PC-9 (cell line): ENCODE measurements at regions of chr1 and their contacts with region 1.

Region 1: DNA sequence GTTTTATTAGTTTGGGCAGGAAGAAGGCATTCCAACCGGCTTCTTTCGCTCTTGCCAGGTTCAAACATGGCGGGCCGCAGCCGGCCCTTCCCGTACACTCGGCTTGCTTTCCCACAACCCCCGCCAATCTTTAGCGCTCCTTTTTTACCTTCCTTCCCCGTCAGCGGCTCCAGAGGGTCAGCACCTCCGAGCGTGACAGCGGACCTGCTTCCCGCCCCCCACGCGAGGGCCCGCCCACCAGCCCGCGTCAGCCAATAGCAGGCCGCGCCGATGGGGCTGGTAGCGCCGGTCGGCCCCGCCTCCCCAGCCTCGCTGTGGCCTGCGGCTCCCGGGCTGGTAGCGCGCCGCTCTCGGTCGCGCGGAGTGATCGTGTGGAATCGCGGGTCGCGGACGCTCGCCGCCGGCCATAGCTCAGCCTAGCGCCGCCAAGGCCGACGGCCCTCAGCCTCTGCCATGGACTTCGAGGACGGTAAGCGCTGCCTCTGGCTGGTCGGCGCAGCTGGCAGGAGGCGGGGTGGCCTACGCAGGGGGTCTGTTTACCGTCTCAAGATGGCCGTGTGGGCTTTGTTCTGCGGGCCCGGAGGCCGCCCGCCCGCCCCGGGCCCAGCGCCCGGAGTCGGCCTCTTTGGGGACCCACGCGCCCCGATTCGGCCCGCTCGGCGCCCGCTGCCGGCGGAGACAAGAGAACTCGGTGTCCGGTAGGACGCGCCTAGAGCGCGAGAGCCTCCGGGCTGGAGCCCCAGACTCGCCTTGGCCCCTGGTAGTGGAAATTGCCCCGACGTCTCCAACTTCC is at the start of gene ZNF326:
- DNase-seq: peak; percentile 97 to 98
- H3K4me3 ChIP-seq: peak within 1 kb of the TSS; percentile 70
- H3K27ac ChIP-seq: peak within 1 kb of the TSS; percentile 87
- H3K4me1 ChIP-seq: peaks cover 78% of the 10 kb centered on the region
- H3K27me3 ChIP-seq: no peaks in the 10 kb centered on the region
- CTCF ChIP-seq: no peak; the same call in 1 of the 2 replicates
- total RNA-seq, gene ZNF326: 23.2 and 26.2 TPM in 2 replicates

Region 2: DNA sequence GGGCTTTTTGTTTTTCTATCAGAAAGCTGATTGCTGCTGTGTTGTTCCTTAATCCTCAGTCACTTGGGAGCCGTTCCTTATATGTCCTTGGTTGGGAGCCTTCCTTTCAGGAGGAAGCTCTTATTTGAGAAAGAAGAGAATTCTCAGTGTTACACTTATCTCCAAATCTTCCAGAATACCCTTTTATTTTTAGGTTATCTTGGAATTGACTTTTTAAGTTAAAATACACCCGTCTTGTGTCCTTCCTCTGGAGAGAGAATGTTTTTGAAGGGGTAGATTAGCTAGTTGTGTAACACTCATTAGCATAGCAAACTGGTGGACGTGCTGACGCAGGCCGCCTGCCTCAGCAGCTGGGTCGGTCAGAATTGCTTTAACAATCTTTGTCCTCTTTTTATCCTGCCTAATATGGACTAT is 428.2 kb before region 1 on chr1:
- CTCF ChIA-PET with region 1: no interaction called
- POLR2A ChIA-PET with region 1: no interaction called
- intact Hi-C with region 1: no loop called
- DNase-seq: no peak
- H3K4me3 ChIP-seq: no peak overlapping the region
- H3K27ac ChIP-seq: no peak overlapping the region
- H3K4me1 ChIP-seq: no peaks in the 10 kb centered on the region
- H3K27me3 ChIP-seq: no peaks in the 10 kb centered on the region
- CTCF ChIP-seq: no peak

Region 3: DNA sequence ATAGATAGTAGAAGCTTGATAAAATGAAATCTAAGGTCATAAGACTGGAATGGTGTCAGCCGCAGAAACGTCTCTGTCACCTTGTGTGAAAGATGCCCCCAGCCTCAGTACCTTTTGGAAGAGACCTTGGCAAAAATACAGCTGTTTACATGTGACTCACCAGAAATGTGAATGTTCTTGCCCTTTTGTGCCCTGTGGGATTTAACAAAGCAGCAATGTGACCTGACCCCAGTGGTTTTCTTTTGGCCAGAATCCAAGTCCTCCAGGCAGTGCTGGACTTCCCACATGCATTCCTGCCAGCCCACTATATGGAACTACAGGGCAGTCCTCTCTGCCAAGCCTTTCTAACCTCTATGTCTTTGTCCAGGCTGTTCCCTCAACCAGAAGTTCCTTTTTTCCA is 389.3 kb before region 1 on chr1:
- CTCF ChIA-PET with region 1: no interaction called
- POLR2A ChIA-PET with region 1: no interaction called
- intact Hi-C with region 1: loop called (anchors 10 kb)
- DNase-seq: peak; percentile 81 to 94
- H3K4me3 ChIP-seq: no peak overlapping the region
- H3K27ac ChIP-seq: no peak overlapping the region
- H3K4me1 ChIP-seq: peaks cover 20% of the 10 kb centered on the region
- H3K27me3 ChIP-seq: no peaks in the 10 kb centered on the region
- CTCF ChIP-seq: no peak

Region 4: DNA sequence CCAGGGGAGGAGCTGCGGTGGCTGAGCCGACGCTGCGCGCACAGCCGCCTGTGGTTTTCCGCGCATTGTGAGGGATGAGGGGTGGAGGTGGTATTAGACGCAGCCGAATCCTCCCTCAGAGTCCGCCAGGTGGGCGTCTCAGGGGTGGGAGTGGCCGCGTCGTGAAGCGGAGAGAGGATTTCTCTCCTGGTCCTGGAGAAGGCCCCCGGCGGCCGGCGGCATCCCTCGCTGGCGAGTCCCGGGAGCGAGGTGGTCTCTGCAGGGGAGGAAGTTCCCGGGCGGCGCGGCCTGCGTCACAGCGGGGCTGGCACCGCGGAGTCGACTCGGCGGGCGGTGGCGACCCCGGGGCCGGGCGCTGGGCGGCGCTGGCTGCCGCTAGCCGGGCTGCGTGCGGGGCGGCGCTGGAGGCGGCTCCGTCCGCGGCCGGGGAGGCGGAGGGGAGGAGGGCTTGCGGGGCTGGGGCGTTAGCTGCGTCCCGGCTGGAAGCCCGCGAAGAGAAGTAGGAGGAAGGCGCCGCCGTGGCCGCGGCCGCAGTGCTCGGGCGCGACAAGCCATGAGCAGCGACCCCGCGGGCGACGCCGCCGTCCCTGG is 362.2 kb before region 1 on chr1 and contains the start of gene LRRC8C:
- CTCF ChIA-PET with region 1: no interaction called
- POLR2A ChIA-PET with region 1: no interaction called
- intact Hi-C with region 1: loop called (anchors 10 kb)
- DNase-seq: peak in 1 of 2 experiments; percentile 81
- H3K4me3 ChIP-seq: peak within 1 kb of the TSS; percentile 77
- H3K27ac ChIP-seq: no peak within 1 kb of the TSS
- H3K4me1 ChIP-seq: peaks cover 37% of the 10 kb centered on the region
- H3K27me3 ChIP-seq: no peaks in the 10 kb centered on the region
- CTCF ChIP-seq: no peak; the same call in 1 of the 2 replicates
- total RNA-seq, gene LRRC8C: 2.0 and 2.2 TPM in 2 replicates

Region 5: DNA sequence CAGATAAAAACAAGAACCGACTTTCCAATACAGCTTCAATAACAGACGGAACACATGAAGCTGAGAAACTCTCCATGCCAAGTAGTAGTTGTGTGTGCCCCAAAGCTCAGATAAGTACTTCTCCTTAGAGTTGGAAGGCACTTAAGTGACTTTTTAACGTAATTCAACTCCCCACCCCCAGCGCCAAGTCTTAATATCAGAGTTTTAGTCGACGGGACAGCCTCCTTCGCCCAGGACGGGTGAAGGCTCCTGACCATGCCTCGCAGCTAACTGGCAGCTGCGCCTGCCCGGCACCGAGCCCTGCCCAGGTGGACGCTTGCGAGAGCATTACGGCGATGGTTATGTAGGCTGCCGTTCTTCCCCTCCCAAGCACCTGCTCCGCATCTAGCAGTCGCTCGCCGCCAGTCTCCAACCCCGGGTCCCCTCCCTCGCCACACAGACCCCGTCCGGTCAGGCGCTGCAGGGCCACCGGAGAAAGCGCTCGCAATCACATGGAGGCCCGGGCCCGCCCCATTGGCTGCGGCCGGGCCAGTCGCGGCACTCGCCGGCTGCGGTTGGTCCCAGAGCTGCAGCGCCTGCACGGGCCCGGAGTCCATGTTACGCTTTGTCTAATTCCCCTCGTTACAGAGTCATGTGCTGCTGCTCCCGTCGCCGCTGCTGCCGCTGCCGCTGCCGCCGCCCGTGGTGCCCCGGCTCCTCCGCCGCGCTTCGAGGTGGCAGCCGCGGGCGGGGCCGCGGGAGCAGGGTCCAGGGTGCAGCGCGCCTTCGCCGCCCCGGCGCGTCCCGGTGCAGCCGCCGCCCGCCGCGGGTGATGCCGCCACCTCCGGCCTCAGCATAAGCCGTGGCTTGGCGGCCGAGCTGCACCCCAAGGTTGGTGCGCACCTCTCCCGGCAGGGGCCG is 174.3 kb before region 1 on chr1 and contains the start of gene LRRC8D:
- CTCF ChIA-PET with region 1: no interaction called
- POLR2A ChIA-PET with region 1: interaction called, 12 read pairs
- intact Hi-C with region 1: no loop called
- DNase-seq: peak; percentile 82 to 86
- H3K4me3 ChIP-seq: peak within 1 kb of the TSS; percentile 75
- H3K27ac ChIP-seq: peak within 1 kb of the TSS; percentile 67
- H3K4me1 ChIP-seq: peaks cover 51% of the 10 kb centered on the region
- H3K27me3 ChIP-seq: no peaks in the 10 kb centered on the region
- CTCF ChIP-seq: no peak
- total RNA-seq, gene LRRC8D: 71.9 and 75.9 TPM in 2 replicates